ENCODE measurements at regions of chr5 and their contacts with region 1.

Region 1: GRCh38 chr5:50727149-50727496 is 60.7 kb downstream of the PARP8 start:
- DNase-seq: no peak
- ATAC-seq: no peak
- H3K4me3 Mint-ChIP-seq: no peak overlapping the region
- H3K27ac Mint-ChIP-seq: no peak overlapping the region
- H3K4me1 Mint-ChIP-seq: peaks cover 60% of the 10 kb centered on the region
- H3K27me3 Mint-ChIP-seq: no peaks in the 10 kb centered on the region
- CTCF ChIP-seq: no peak

Region 2: DNA sequence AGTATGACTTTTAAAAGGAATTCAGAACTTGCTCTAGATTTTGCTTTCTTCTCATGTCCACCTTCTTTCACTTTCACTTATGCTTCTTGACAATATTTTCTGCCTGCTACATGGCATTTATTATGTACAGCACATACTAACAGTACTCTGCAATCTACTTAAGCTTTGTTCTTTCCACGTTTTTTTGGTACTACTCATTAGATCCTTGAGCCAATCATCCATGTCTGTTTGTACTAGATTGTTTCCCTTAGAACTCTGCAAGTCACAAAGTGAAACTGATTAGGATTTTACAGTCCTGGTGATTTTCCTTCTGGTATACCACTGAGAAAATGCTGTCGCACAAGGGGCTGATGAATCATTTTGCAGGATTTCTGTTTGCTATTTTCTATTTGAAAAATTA is 17.7 kb after region 1 on chr5:
- CTCF ChIA-PET with region 1: interaction called, 4 read pairs
- POLR2A ChIA-PET with region 1: no interaction called
- intact Hi-C with region 1: loop called (anchors 2 kb)
- DNase-seq: no peak
- ATAC-seq: peak; percentile 49
- H3K4me3 Mint-ChIP-seq: peak overlapping the region; percentile 77
- H3K27ac Mint-ChIP-seq: peak overlapping the region; percentile 31
- H3K4me1 Mint-ChIP-seq: peaks cover 50% of the 10 kb centered on the region
- H3K27me3 Mint-ChIP-seq: no peaks in the 10 kb centered on the region
- CTCF ChIP-seq: no peak

Measured in activated B cell treated with CpG ODN at 0.5 μM for 24 hours (primary cell).